Heart left ventricle (tissue), 16 donors: ENCODE measurements at regions of chr19 and their contacts with region 1.

Region 1: GRCh38 chr19:51887522-51888498 is at the start of gene ZNF577:
- DNase-seq: peak; percentile 94 to 97 (median 94)
- ATAC-seq: peak; percentile 98 to 99 (median 99)
- H3K4me3 ChIP-seq: peak within 1 kb of the TSS; percentile 51 to 84 (median 74)
- H3K27ac ChIP-seq: peak within 1 kb of the TSS; percentile 51 to 89 (median 77)
- H3K4me1 ChIP-seq: peaks cover 0 to 13% (median 7%) of the 10 kb centered on the region in 12 donors
- H3K27me3 ChIP-seq: no peaks in the 10 kb centered on the region
- CTCF ChIP-seq: no peak
- POLR2A ChIP-seq: no peak
- total RNA-seq, gene ZNF577: 6.2 to 12.8 (median 7.7) TPM

Region 2: GRCh38 chr19:51986309-51987291 is 98.8 kb after region 1 on chr19 and contains the start of gene ZNF350:
- intact Hi-C with region 1: loop called in 1 of 10 experiments (anchors 5 kb)
- DNase-seq: peak; percentile 90 to 96 (median 94)
- ATAC-seq: peak; percentile 98 to 100 (median 100)
- H3K4me3 ChIP-seq: peak within 1 kb of the TSS; percentile 66 to 94 (median 81)
- H3K27ac ChIP-seq: peak within 1 kb of the TSS in 11 of 12 donors; percentile 40 to 82 (median 73)
- H3K4me1 ChIP-seq: peaks cover 0 to 17% (median 12%) of the 10 kb centered on the region in 12 donors
- H3K27me3 ChIP-seq: no peaks in the 10 kb centered on the region
- CTCF ChIP-seq: peak in 1 of 12 donors; percentile 14
- POLR2A ChIP-seq: no peak
- total RNA-seq, gene ZNF350: 3.4 to 10.7 (median 7.6) TPM